Caco-2 (cell line): ENCODE measurements at regions of chr15 and their contacts with region 1.

Region 1: DNA sequence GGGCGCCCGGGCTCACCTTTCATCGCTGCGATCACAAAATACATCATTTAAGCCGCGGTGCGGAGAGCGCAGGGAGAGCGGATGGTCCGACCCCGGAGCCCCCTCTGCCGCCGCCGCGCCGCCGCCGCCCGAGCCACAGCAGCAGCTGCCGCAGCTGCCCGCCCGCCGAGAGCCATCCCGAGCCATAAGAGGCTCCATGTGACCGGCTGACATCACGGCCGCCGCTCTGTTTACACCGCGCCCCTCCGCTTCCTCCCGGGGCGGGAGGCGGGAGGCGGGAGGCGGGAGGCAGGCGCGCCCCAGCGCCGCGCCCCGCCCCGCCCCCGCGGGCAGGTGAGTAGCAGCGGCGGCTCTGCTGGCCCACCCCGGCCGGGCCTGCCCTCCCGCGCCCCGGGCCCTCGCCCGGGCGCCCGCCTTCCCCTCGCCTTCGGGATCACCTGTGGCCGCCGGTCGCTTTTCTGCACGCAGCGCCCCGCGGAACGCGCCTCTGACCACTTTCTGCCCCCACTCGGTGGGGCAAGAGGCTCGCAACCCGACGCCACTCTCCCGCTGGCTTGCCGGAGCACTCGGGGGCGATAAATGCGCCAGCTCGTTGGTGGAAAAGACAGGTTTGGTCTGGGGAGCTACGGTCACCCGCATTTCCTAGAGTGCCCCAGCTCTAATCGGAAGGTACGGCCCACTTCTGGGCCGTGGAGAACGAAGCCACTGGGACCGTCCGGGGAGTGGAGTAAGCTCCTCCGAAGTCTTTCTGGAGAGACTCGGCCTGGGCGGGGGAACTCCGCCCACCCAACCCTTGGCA is 113.6 kb upstream of the ICE2 start:
- DNase-seq: peak; percentile 80 to 90
- H3K4me3 ChIP-seq: peak overlapping the region; percentile 75
- H3K4me3 Mint-ChIP-seq: peak overlapping the region; percentile 82
- H3K27ac Mint-ChIP-seq: peak overlapping the region; percentile 45
- H3K4me1 ChIP-seq: peaks cover 13% of the 10 kb centered on the region
- H3K4me1 Mint-ChIP-seq: peaks cover 7% of the 10 kb centered on the region
- H3K27me3 ChIP-seq: no peaks in the 10 kb centered on the region
- H3K27me3 Mint-ChIP-seq: peaks cover 5% of the 10 kb centered on the region
- CTCF ChIP-seq: no peak

Region 2: DNA sequence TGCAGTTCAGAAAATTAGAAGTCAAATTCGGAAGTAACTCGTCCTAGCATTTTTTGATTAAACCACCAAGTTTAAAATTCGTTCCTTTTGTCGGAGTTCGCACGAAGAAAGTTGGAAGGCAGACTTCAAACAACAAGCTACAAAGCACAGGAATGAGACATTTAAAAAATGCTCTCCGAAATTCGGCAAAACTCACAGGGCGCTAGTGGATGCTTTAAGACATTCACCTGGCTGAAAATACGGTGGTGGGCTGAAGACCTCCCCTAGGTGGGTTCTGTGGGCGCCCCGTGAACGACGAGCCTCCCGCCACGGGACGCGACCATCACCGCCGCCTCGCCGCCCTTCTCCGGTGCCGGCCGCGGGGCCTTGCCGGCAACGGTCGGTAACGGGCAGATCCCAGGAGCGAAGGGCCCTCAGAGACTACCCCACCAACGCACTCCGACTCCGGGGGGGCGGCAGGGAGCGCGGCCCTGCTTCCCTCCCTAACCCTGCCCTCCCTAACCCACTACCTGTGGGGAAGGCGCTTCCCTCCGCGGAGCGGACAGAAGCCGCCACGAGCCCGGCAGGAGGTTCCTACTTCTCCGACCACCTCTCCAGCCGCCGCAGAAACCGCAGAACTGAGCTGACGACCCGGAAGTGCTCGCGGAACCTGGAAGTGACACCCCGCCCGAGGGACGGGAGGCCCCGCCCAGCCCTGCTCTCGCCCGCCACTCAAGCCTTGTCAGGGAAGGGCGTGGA is 935.5 kb before region 1 on chr15 and contains the start of gene GTF2A2:
- CTCF ChIA-PET with region 1: no interaction called
- POLR2A ChIA-PET with region 1: interaction called, 13 read pairs
- intact Hi-C with region 1: no loop called
- DNase-seq: peak; percentile 94 to 95
- H3K4me3 ChIP-seq: peak within 1 kb of the TSS; percentile 70
- H3K4me3 Mint-ChIP-seq: no peak within 1 kb of the TSS
- H3K27ac Mint-ChIP-seq: no peak within 1 kb of the TSS
- H3K4me1 ChIP-seq: peaks cover 10% of the 10 kb centered on the region
- H3K4me1 Mint-ChIP-seq: peaks cover 8% of the 10 kb centered on the region
- H3K27me3 ChIP-seq: no peaks in the 10 kb centered on the region
- H3K27me3 Mint-ChIP-seq: no peaks in the 10 kb centered on the region
- CTCF ChIP-seq: no peak
- total RNA-seq, gene GTF2A2: 147 and 153 TPM in 2 replicates

Region 3: DNA sequence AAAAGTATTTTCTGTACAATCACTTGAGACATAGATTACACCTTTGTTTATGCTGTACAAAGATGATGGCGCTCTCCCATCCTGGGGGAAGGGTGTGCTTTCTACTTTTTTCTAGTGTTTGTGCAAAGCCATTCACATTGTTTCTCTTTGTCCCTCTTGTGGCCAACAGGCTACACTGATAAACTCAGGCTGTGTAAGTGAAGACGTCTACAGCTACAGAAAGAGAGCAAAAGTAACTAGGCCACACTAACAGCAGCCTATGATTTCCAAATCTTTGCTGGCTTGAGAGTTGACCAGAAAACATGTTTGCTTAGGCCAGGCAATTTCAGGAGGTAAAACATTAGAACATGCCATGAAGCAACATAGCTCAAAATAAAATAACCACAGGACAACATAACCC is 513.4 kb before region 1 on chr15:
- CTCF ChIA-PET with region 1: no interaction called
- POLR2A ChIA-PET with region 1: no interaction called
- intact Hi-C with region 1: no loop called
- DNase-seq: no peak
- H3K4me3 ChIP-seq: no peak overlapping the region
- H3K4me3 Mint-ChIP-seq: no peak overlapping the region
- H3K27ac Mint-ChIP-seq: no peak overlapping the region
- H3K4me1 ChIP-seq: no peaks in the 10 kb centered on the region
- H3K4me1 Mint-ChIP-seq: peaks cover 5% of the 10 kb centered on the region
- H3K27me3 ChIP-seq: no peaks in the 10 kb centered on the region
- H3K27me3 Mint-ChIP-seq: peaks cover 9% of the 10 kb centered on the region
- CTCF ChIP-seq: peak in 1 of 2 experiments; percentile 52

Region 4: DNA sequence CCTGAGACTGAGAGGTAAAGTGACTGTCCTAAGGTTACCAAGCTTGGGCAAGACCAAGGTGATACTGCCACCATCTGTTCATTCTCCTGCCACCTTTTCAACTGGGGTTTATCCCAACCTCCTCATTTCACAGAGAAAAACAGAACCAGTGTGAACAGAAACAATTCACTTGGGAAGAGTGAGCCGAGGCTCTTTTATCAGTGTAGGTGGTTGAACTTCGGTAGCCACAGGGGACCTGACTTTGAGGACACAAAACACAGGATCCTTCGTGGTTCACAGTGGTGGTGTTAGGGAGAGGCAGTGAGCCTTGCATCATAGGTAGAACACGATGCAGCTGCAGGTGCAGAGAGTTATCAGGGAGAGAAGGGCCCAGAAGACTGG is 40.8 kb before region 1 on chr15:
- CTCF ChIA-PET with region 1: no interaction called
- POLR2A ChIA-PET with region 1: no interaction called
- intact Hi-C with region 1: loop called (anchors 5 kb)
- DNase-seq: peak; percentile 59 to 60
- H3K4me3 ChIP-seq: no peak overlapping the region
- H3K4me3 Mint-ChIP-seq: peak overlapping the region; percentile 60
- H3K27ac Mint-ChIP-seq: peak overlapping the region; percentile 93
- H3K4me1 ChIP-seq: peaks cover 37% of the 10 kb centered on the region
- H3K4me1 Mint-ChIP-seq: peaks cover 42% of the 10 kb centered on the region
- H3K27me3 ChIP-seq: no peaks in the 10 kb centered on the region
- H3K27me3 Mint-ChIP-seq: no peaks in the 10 kb centered on the region
- CTCF ChIP-seq: peak in 1 of 2 experiments; percentile 25

Region 5: GRCh38 chr15:60580650-60581376 is 11.8 kb before region 1 on chr15:
- CTCF ChIA-PET with region 1: interaction called, 3 read pairs
- POLR2A ChIA-PET with region 1: interaction called, 4 read pairs
- intact Hi-C with region 1: loop called (anchors 1 kb)
- DNase-seq: peak; percentile 59 to 63
- H3K4me3 ChIP-seq: no peak overlapping the region
- H3K4me3 Mint-ChIP-seq: peak overlapping the region; percentile 10
- H3K27ac Mint-ChIP-seq: peak overlapping the region; percentile 3
- H3K4me1 ChIP-seq: peaks cover 42% of the 10 kb centered on the region
- H3K4me1 Mint-ChIP-seq: peaks cover 39% of the 10 kb centered on the region
- H3K27me3 ChIP-seq: no peaks in the 10 kb centered on the region
- H3K27me3 Mint-ChIP-seq: no peaks in the 10 kb centered on the region
- CTCF ChIP-seq: no peak

Region 6: GRCh38 chr15:60620708-60621107 is 28.1 kb after region 1 on chr15:
- CTCF ChIA-PET with region 1: no interaction called
- POLR2A ChIA-PET with region 1: no interaction called
- intact Hi-C with region 1: no loop called
- DNase-seq: no peak
- H3K4me3 ChIP-seq: no peak overlapping the region
- H3K4me3 Mint-ChIP-seq: no peak overlapping the region
- H3K27ac Mint-ChIP-seq: no peak overlapping the region
- H3K4me1 ChIP-seq: 0 out of 2 replicates have a peak, but pooled peaks cover 2% of the 10 kb centered on the region
- H3K4me1 Mint-ChIP-seq: no peaks in the 10 kb centered on the region
- H3K27me3 ChIP-seq: no peaks in the 10 kb centered on the region
- H3K27me3 Mint-ChIP-seq: peaks cover 9% of the 10 kb centered on the region
- CTCF ChIP-seq: no peak

Region 7: GRCh38 chr15:60649845-60650548 is 57.4 kb after region 1 on chr15:
- CTCF ChIA-PET with region 1: no interaction called
- POLR2A ChIA-PET with region 1: no interaction called
- intact Hi-C with region 1: loop called (anchors 5 kb)
- DNase-seq: no peak
- H3K4me3 ChIP-seq: no peak overlapping the region
- H3K4me3 Mint-ChIP-seq: no peak overlapping the region
- H3K27ac Mint-ChIP-seq: no peak overlapping the region
- H3K4me1 ChIP-seq: no peaks in the 10 kb centered on the region
- H3K4me1 Mint-ChIP-seq: peaks cover 7% of the 10 kb centered on the region
- H3K27me3 ChIP-seq: no peaks in the 10 kb centered on the region
- H3K27me3 Mint-ChIP-seq: peaks cover 15% of the 10 kb centered on the region
- CTCF ChIP-seq: no peak

Region 8: DNA sequence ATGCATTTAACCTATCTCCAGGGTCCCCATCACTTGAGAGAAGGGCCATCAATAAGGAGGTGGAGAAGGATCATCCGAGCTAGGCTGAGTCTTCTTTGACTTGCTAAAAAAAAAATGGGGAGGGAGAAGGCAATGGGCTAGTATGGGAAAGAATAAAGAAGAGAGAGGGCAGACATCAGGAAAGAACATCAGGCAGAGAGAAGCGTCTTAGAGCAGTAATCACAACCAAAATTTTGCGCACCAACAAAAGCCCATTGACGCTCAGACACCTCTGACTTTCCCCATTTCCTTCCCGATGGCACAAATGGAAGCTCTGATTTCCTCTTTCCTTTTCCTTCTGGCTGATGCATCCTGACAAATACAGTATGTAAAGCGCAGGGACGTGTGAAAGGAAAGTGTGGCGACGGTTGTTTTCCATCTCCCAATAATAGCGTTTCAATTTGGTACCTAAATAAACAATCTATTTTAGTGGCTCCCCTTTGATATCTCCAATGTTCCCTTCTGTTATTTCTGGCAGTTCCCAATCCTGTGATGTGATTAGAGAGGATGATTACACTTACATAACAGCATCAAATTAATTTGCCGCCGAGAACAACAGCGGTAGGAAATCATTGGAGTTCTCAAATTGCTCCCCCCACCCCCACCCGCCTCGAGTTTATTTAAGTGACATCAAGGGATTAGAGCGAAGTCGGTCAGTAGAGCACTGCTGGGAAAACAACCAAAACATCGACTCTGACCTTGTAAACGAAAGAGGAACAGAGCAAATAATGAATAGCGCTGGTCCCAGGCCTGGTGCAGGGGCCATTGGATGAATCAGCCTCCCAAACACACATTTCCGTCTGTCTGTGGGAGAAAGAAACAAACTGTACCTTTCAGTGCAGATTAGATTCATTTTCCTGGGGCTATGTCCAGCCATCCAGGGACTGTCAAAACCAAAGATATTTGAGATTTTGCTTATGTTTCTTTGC is 159.7 kb after region 1 on chr15:
- CTCF ChIA-PET with region 1: no interaction called
- POLR2A ChIA-PET with region 1: no interaction called
- intact Hi-C with region 1: no loop called
- DNase-seq: no peak
- H3K4me3 ChIP-seq: no peak overlapping the region
- H3K4me3 Mint-ChIP-seq: no peak overlapping the region
- H3K27ac Mint-ChIP-seq: no peak overlapping the region
- H3K4me1 ChIP-seq: peaks cover 8% of the 10 kb centered on the region
- H3K4me1 Mint-ChIP-seq: no peaks in the 10 kb centered on the region
- H3K27me3 ChIP-seq: no peaks in the 10 kb centered on the region
- H3K27me3 Mint-ChIP-seq: peaks cover 6% of the 10 kb centered on the region
- CTCF ChIP-seq: no peak